ENCODE measurements at regions of chr7 and their contacts with region 1.

Region 1: GRCh38 chr7:71682841-71683781 is 551.2 kb downstream of the GALNT17 start:
- DNase-seq: no peak

Region 2: GRCh38 chr7:71566991-71567390 is 116.1 kb before region 1 on chr7:
- intact Hi-C with region 1: loop called in 1 of 2 experiments (anchors 1 kb)
- DNase-seq: no peak

Region 3: DNA sequence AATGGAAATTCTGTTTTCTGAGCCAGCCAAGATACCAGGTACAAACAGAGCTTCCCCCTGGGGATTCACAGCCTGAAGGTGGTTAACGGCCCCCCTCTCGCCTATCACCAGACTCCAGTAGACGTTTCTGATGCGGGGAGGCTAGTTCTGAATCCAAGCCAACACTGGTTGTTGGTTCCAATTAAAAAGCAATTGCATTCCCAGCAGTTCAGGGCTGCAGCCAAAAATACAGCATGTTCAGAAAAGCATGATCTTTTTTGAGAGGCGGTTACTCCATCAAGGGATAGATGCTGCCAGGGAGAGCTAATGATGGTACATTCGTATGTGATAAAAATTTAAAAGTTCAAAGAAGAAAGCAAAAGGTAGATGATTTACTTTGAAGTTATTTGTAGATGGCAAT is 70.2 kb before region 1 on chr7:
- intact Hi-C with region 1: loop called in 1 of 2 experiments (anchors 10 kb)
- DNase-seq: no peak

Region 4: GRCh38 chr7:72435366-72435765 is 752.3 kb after region 1 on chr7:
- intact Hi-C with region 1: loop called in 1 of 2 experiments (anchors 5 kb)
- DNase-seq: peak; percentile 64